CD8-positive, alpha-beta T cell (primary cell): ENCODE measurements at regions of chr2 and their contacts with region 1.

Region 1: GRCh38 chr2:177763532-177764265 is 308.9 kb downstream of the PDE11A start:
- DNase-seq: peak; percentile 57 to 83 (median 77)
- ATAC-seq: peak; percentile 97
- H3K4me3 ChIP-seq: no peak overlapping the region
- H3K4me3 Mint-ChIP-seq: no peak overlapping the region
- H3K27ac ChIP-seq: no peak overlapping the region
- H3K27ac Mint-ChIP-seq: no peak overlapping the region
- H3K4me1 ChIP-seq: peaks cover 5% of the 10 kb centered on the region
- H3K4me1 Mint-ChIP-seq: peaks cover 6% of the 10 kb centered on the region
- H3K27me3 ChIP-seq: no peaks in the 10 kb centered on the region
- H3K27me3 Mint-ChIP-seq: peaks cover 12% of the 10 kb centered on the region
- CTCF ChIP-seq: peak; percentile 82

Region 2: GRCh38 chr2:177419274-177419673 is 344.4 kb before region 1 on chr2:
- CTCF ChIA-PET with region 1: interaction called, 3 read pairs
- POLR2A ChIA-PET with region 1: no interaction called
- intact Hi-C with region 1: loop called in 1 of 2 experiments (anchors 10 kb)
- DNase-seq: no peak
- ATAC-seq: no peak
- H3K4me3 ChIP-seq: no peak overlapping the region
- H3K4me3 Mint-ChIP-seq: no peak overlapping the region
- H3K27ac ChIP-seq: no peak overlapping the region
- H3K27ac Mint-ChIP-seq: no peak overlapping the region
- H3K4me1 ChIP-seq: no peaks in the 10 kb centered on the region
- H3K4me1 Mint-ChIP-seq: peaks cover 27% of the 10 kb centered on the region
- H3K27me3 ChIP-seq: no peaks in the 10 kb centered on the region
- H3K27me3 Mint-ChIP-seq: no peaks in the 10 kb centered on the region
- CTCF ChIP-seq: no peak

Region 3: DNA sequence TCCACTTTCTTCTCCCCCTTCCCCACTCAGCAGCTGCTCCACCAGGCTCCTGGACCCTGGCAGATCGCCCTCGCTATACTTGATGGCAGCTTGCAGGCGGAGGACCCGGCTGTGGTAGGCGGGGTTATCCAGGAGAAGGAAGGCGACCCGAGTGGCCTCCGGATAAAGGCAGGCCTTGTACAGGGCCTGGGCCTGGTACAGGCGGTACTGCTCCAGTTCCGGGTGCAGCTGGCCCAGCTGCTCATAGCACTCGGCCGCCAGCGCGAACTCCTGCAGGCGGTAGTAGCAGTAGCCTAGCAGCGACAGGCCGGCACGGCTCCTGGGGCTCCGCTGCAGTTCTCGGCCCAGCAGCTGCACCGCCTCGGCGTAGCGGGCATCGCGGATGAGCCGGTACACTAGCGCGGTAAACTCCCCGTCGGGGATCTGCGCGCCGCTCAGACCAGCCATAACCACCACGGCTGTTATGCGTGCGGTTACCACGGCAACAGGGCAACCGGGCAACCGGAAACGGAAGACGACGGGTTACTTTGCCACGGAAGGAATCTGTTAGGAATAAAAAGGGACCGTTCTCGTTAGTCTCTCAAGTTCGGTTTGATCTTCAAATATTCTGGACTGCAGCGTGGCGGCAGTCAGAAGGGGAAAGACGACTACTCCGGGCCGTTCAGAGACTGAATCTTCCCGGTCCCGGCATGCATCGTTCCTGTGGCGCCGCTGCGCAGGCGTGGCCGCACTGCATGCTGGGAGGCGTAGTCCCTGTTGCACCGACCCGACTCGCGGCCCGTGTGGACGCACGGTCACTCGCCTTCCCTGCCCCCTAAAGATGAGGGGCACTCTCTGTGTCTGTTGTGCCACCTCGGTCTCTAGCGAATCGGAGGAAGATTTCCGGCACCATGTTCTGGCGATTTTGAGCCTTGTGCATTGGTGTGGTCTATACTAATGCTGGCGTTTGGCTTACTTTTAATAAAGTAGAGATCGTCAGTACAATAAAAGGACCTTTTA is 145.1 kb before region 1 on chr2:
- CTCF ChIA-PET with region 1: no interaction called
- POLR2A ChIA-PET with region 1: no interaction called
- intact Hi-C with region 1: loop called in 1 of 2 experiments (anchors 10 kb)
- DNase-seq: peak; percentile 80 to 96 (median 91)
- ATAC-seq: peak; percentile 89
- H3K4me3 ChIP-seq: peak overlapping the region; percentile 89 to 93
- H3K4me3 Mint-ChIP-seq: peak overlapping the region; percentile 97
- H3K27ac ChIP-seq: peak overlapping the region; percentile 97 to 99
- H3K27ac Mint-ChIP-seq: peak overlapping the region; percentile 98
- H3K4me1 ChIP-seq: peaks cover 8% of the 10 kb centered on the region
- H3K4me1 Mint-ChIP-seq: peaks cover 7% of the 10 kb centered on the region
- H3K27me3 ChIP-seq: no peaks in the 10 kb centered on the region
- H3K27me3 Mint-ChIP-seq: no peaks in the 10 kb centered on the region
- CTCF ChIP-seq: no peak